ENCODE measurements at regions of chr9 and their contacts with region 1.

Region 1: GRCh38 chr9:113523421-113524236 is 60.1 kb downstream of the RGS3 start:
- DNase-seq: no peak
- H3K4me3 ChIP-seq: no peak overlapping the region
- H3K27ac ChIP-seq: no peak overlapping the region
- H3K4me1 ChIP-seq: peaks cover 0 to 2% (median 0%) of the 10 kb centered on the region in 4 experiments; a peak in 1 of 7 replicates
- H3K27me3 ChIP-seq: no peaks in the 10 kb centered on the region
- CTCF ChIP-seq: no peak
- EP300 ChIP-seq: no peak
- POLR2A ChIP-seq: no peak
- RAD21 ChIP-seq: no peak

Region 2: GRCh38 chr9:113541019-113541900 is 17.6 kb after region 1 on chr9:
- CTCF ChIA-PET with region 1: interaction called, 19 read pairs
- POLR2A ChIA-PET with region 1: interaction called, 3 read pairs
- DNase-seq: peak in 1 of 2 experiments; percentile 66
- H3K4me3 ChIP-seq: peak overlapping the region in 1 of 4 experiments; percentile 14; a peak in 1 of 8 replicates
- H3K27ac ChIP-seq: no peak overlapping the region
- H3K4me1 ChIP-seq: peaks cover 0 to 10% (median 5%) of the 10 kb centered on the region in 4 experiments; a peak in 5 of 7 replicates
- H3K27me3 ChIP-seq: no peaks in the 10 kb centered on the region
- CTCF ChIP-seq: no peak
- EP300 ChIP-seq: no peak
- POLR2A ChIP-seq: peak in 1 of 2 experiments; percentile 57; a peak in 2 of 3 replicates
- RAD21 ChIP-seq: no peak

Region 3: GRCh38 chr9:113600023-113600823 is 76.6 kb after region 1 on chr9:
- CTCF ChIA-PET with region 1: no interaction called
- POLR2A ChIA-PET with region 1: no interaction called
- DNase-seq: no peak
- H3K4me3 ChIP-seq: no peak overlapping the region
- H3K27ac ChIP-seq: no peak overlapping the region
- H3K4me1 ChIP-seq: peaks cover 0 to 20% (median 13%) of the 10 kb centered on the region in 4 experiments; a peak in 6 of 7 replicates
- H3K27me3 ChIP-seq: no peaks in the 10 kb centered on the region
- CTCF ChIP-seq: no peak
- EP300 ChIP-seq: no peak
- POLR2A ChIP-seq: no peak
- RAD21 ChIP-seq: no peak

Region 4: DNA sequence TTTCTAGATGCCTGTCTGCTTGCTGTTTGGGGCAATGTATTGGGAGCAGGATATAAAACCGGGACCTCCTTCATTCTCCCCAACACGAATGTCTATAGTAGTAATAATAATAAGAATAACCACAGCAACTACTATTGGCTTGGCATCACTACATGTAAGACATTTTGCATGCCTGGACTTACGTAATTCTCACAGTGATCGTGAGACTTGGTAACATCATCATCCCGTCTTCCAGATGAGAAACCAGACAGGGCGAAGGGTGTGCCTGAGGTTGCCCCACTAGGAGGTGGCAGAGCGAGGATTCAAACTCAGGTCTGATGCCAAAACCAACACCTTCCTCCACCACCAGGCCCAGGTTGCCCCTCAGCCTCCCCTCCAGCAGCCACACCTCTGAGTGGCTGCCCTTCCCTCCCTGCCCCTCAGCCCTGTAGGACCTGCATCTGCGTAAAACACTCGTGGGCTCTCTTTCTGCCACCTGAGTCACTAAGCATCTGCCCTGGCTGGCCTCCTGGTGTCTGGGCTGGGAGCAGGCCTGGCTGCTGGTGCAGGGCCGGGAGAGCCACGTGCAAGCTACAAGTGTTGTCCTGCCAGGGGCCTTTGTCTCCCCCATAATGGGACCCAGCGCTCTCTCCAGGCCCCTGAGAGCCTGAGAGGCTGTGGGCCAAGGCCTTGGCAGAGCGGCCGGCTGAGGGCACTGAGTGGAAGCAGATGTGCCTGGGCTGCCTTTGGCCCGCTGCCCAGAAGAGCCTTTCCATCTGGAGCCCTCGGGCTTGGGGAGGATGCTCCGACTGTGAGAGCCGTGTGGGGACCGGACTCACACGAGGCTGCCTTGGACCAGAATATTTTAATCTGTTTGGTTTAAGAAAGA is 125.2 kb after region 1 on chr9:
- CTCF ChIA-PET with region 1: no interaction called
- POLR2A ChIA-PET with region 1: no interaction called
- DNase-seq: no peak
- H3K4me3 ChIP-seq: no peak overlapping the region
- H3K27ac ChIP-seq: no peak overlapping the region
- H3K4me1 ChIP-seq: peaks cover 0 to 15% (median 6%) of the 10 kb centered on the region in 4 experiments; a peak in 4 of 7 replicates
- H3K27me3 ChIP-seq: peaks cover 12 to 41% (median 32%) of the 10 kb centered on the region in 4 experiments
- CTCF ChIP-seq: no peak
- EP300 ChIP-seq: no peak
- POLR2A ChIP-seq: no peak
- RAD21 ChIP-seq: no peak

Measured in H1 (cell line).